Activated T-helper 1 cell treated with anti-CD3 and anti-CD28 coated beads, Interleukin-12 subunit alpha, Interleukin-12 subunit beta, Interleukin-2, Interleukin-4 antibody, amounts not matched to agents 30 ng/mL and 10 ng/mL and 1 ng/mL, durations not matched to agents 14 hours and 24 hours and 36 hours (primary cell): ENCODE measurements at regions of chr6 and their contacts with region 1.

Region 1: GRCh38 chr6:4936681-4937041 is 67.2 kb downstream of the RPP40 start:
- DNase-seq: no peak
- H3K4me3 Mint-ChIP-seq: no peak overlapping the region
- H3K27ac Mint-ChIP-seq: no peak overlapping the region
- H3K4me1 Mint-ChIP-seq: peaks cover 45% of the 10 kb centered on the region
- H3K27me3 Mint-ChIP-seq: no peaks in the 10 kb centered on the region

Region 2: GRCh38 chr6:4637691-4638433 is 298.8 kb before region 1 on chr6:
- intact Hi-C with region 1: loop called (anchors 2 kb)
- DNase-seq: peak; percentile 8
- H3K4me3 Mint-ChIP-seq: no peak overlapping the region
- H3K27ac Mint-ChIP-seq: peak overlapping the region; percentile 52
- H3K4me1 Mint-ChIP-seq: peaks cover 11% of the 10 kb centered on the region
- H3K27me3 Mint-ChIP-seq: peaks cover 4% of the 10 kb centered on the region

Region 3: GRCh38 chr6:4727671-4728435 is 208.8 kb before region 1 on chr6:
- intact Hi-C with region 1: loop called (anchors 5 kb)
- DNase-seq: no peak
- H3K4me3 Mint-ChIP-seq: no peak overlapping the region
- H3K27ac Mint-ChIP-seq: no peak overlapping the region
- H3K4me1 Mint-ChIP-seq: peaks cover 4% of the 10 kb centered on the region
- H3K27me3 Mint-ChIP-seq: peaks cover 6% of the 10 kb centered on the region